Activated T-helper 1 cell treated with anti-CD3 and anti-CD28 coated beads, Interleukin-12 subunit alpha, Interleukin-12 subunit beta, Interleukin-2, Interleukin-4 antibody, amounts not matched to agents 30 ng/mL and 10 ng/mL and 1 ng/mL, durations not matched to agents 14 hours and 24 hours and 36 hours (primary cell): ENCODE measurements at regions of chr1 and their contacts with region 1.

Region 1: GRCh38 chr1:224425279-224425884 is 9.2 kb downstream of the WDR26 start:
- DNase-seq: no peak
- H3K4me3 Mint-ChIP-seq: no peak overlapping the region
- H3K27ac Mint-ChIP-seq: peak overlapping the region; percentile 25
- H3K4me1 Mint-ChIP-seq: peaks cover 47% of the 10 kb centered on the region
- H3K27me3 Mint-ChIP-seq: no peaks in the 10 kb centered on the region

Region 2: DNA sequence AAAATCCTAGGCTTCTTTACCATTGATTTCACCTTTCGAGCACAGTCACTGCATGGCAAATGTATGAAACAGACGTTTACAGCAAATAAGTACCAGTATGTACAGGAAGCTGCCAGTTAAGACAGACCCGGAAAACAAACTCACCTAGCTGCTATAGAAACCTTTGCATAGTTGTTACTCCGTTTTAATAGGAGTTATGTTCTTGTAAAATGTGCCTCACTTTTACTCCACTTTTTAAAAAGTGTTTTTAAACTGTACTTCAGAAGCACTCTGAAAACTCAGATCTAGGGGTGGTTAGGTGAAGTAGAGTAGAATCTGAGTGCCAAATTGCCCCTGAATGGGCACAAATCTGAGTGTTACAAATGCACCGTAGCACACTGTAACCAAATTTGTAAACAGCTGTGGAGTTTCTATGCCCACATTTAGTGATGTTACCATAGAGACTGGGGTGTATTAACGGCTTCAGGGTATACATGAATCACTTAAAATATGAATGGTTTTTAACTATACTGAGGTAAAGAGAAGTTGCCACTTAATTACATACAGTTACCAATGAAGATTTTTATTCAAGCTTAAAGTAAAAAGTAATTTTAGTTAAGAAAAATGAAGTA is 38.0 kb before region 1 on chr1:
- intact Hi-C with region 1: loop called (anchors 2 kb)
- DNase-seq: no peak
- H3K4me3 Mint-ChIP-seq: peak overlapping the region; percentile 5
- H3K27ac Mint-ChIP-seq: no peak overlapping the region
- H3K4me1 Mint-ChIP-seq: peaks cover 39% of the 10 kb centered on the region
- H3K27me3 Mint-ChIP-seq: no peaks in the 10 kb centered on the region

Region 3: DNA sequence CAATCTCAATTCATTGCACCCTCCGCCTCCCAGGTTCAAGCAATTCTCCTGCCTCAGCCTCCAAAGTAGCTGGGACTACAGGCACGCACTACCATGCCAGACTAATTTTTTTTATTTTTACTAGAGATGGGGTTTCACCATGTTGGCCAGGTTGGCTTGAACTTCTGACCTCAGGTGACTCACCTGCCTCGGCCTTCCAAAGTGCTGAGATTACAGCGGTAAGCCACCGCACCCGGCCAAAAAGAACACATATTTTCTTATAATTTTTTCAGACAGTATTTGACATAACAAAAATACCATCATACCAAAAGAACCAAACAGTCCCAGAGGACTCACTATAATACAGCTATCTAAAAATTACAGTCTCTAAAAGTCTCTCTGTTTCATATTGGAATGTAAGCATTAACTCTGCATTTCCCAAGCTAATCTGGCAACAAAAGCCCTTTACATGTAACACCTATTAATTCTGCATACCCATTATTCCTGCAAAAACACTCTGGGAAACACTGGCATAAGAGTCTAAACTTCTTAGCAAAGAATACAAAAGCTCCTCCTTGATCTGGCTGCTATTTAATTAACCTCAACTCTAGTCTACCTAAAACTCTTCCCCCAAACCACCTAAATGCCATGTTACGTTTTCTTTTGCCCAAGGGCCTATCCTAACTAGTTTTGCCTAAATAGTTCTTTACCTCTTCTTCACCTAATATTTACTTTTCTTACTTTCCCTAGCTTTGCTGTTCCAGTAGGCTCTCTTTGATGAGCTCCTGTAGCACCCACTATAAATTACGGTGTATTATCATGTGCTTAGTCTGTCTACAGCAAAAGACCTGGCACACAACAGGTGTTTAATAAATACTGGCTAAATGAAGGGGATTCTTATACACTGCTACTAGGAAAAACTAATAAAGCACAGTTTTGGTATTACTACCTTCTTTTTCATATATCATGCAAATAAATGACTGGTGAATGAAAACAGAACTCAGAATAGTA is 17.5 kb before region 1 on chr1:
- intact Hi-C with region 1: loop called (anchors 2 kb)
- DNase-seq: no peak
- H3K4me3 Mint-ChIP-seq: no peak overlapping the region
- H3K27ac Mint-ChIP-seq: peak overlapping the region; percentile 15
- H3K4me1 Mint-ChIP-seq: peaks cover 27% of the 10 kb centered on the region
- H3K27me3 Mint-ChIP-seq: no peaks in the 10 kb centered on the region